ENCODE measurements at regions of chr9 and their contacts with region 1.

Region 1: GRCh38 chr9:133485361-133486260 is 6.7 kb upstream of the SLC2A6 start:
- DNase-seq: no peak
- ATAC-seq: peak; percentile 62
- H3K4me3 ChIP-seq: peak overlapping the region in 3 of 5 experiments; percentile 14 to 31 (median 28)
- H3K4me3 Mint-ChIP-seq: peak overlapping the region; percentile 59
- H3K27ac ChIP-seq: no peak overlapping the region
- H3K27ac Mint-ChIP-seq: no peak overlapping the region
- H3K4me1 ChIP-seq: peaks cover 5 to 10% of the 10 kb centered on the region in 2 donors
- H3K4me1 Mint-ChIP-seq: peaks cover 4% of the 10 kb centered on the region
- H3K27me3 ChIP-seq: peaks cover 0 to 10% (median 0%) of the 10 kb centered on the region in 4 experiments
- H3K27me3 Mint-ChIP-seq: peaks cover 18% of the 10 kb centered on the region
- CTCF ChIP-seq: no peak

Region 2: GRCh38 chr9:133023117-133023890 is 462.3 kb before region 1 on chr9:
- CTCF ChIA-PET with region 1: interaction called, 3 read pairs
- POLR2A ChIA-PET with region 1: no interaction called
- intact Hi-C with region 1: loop called (anchors 5 kb)
- DNase-seq: no peak
- ATAC-seq: no peak
- H3K4me3 ChIP-seq: no peak overlapping the region
- H3K4me3 Mint-ChIP-seq: no peak overlapping the region
- H3K27ac ChIP-seq: no peak overlapping the region
- H3K27ac Mint-ChIP-seq: no peak overlapping the region
- H3K4me1 ChIP-seq: peaks cover 3 to 5% of the 10 kb centered on the region in 2 donors
- H3K4me1 Mint-ChIP-seq: peaks cover 7% of the 10 kb centered on the region
- H3K27me3 ChIP-seq: no peaks in the 10 kb centered on the region
- H3K27me3 Mint-ChIP-seq: peaks cover 2% of the 10 kb centered on the region
- CTCF ChIP-seq: no peak

Region 3: DNA sequence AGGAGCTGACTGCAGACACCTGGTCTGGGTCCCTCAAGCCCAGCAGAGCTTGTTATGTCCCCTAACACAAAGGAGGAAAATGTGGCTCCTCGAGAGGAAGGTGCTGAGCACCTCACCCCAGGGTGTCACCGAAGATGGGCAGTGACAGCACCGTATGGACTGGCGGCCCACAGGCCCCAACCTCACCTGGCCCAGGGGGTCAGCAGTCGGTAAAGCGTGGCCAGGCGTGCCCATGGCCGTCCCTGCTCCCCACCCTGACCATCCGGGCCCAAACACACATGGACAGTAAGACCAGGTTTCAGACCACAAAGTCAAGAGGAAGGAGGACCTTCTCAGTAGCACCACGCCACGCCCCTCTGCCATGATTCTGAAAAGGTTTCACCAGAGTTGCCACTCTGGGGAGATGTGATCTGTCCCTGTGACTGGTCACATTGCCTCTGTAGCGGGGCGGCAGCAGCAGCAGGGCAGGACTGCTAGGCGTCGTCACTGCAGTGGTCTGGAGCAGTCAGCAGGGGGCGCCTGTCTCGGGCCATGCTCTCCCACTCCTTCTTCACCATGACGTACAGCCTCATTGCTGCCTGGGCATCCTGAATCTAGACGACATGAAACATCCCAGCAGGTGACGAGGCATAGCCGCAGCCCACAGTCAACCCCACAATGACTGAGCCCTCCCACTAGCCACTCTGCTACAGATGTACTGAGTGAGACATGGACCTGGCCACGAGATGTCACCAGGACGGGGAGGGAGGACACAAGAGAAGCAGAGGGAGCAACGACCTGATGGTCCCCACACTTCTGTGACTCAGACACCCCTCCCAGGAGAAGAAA is 78.9 kb before region 1 on chr9:
- CTCF ChIA-PET with region 1: interaction called, 34 read pairs
- POLR2A ChIA-PET with region 1: no interaction called
- intact Hi-C with region 1: loop called (anchors 1 kb)
- DNase-seq: peak; percentile 86
- ATAC-seq: peak; percentile 93
- H3K4me3 ChIP-seq: no peak overlapping the region
- H3K4me3 Mint-ChIP-seq: no peak overlapping the region
- H3K27ac ChIP-seq: no peak overlapping the region
- H3K27ac Mint-ChIP-seq: peak overlapping the region; percentile 46
- H3K4me1 ChIP-seq: peaks cover 0 to 2% of the 10 kb centered on the region in 2 donors
- H3K4me1 Mint-ChIP-seq: peaks cover 2% of the 10 kb centered on the region
- H3K27me3 ChIP-seq: no peaks in the 10 kb centered on the region
- H3K27me3 Mint-ChIP-seq: no peaks in the 10 kb centered on the region
- CTCF ChIP-seq: peak; percentile 87

Measured in B cell (primary cell).